Activated CD4-positive, alpha-beta memory T cell treated with anti-CD3 and anti-CD28 coated beads for 36 hours (primary cell): ENCODE measurements at regions of chr2 and their contacts with region 1.

Region 1: DNA sequence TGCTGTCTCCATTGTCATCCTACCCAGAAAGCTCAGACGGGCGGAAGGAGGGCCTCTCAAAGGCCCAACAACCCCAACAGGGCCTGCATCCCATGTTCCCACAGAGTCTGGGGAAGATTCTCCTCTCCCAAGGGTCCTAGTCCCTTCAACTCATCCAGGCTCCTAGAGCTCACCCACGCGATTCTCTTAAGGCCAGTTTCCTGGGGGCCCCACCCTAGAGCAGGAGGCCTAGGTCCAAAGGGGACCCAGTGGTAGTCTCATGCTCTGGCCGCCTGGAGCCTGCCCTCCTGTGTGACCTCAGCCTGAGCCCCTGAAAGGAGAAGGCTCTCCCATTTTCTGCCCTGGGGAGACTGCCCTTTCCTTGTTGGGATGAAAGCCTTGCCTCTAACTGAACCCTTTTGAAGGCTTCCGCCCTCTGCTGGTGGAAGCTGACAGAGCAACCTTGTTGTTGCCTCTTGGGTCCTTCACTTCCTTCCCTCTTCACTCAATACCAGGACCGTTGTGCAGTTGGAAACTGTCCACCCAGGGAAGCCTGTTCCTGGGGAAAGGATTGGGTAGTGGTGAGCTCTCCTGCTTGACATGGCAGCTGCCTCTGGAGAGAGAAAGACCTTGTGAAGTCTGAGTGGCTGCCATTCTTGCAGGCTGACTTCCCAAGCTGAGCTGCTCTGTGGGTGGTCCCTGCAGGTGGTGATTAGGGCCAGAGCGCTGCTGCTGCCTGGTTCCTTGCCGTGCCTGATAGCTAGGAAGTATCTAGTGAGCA is 86.0 kb upstream of the ALPP start:
- DNase-seq: peak; percentile 73
- H3K4me3 Mint-ChIP-seq: no peak overlapping the region
- H3K27ac Mint-ChIP-seq: no peak overlapping the region
- H3K4me1 Mint-ChIP-seq: no peaks in the 10 kb centered on the region
- H3K27me3 Mint-ChIP-seq: no peaks in the 10 kb centered on the region

Region 2: DNA sequence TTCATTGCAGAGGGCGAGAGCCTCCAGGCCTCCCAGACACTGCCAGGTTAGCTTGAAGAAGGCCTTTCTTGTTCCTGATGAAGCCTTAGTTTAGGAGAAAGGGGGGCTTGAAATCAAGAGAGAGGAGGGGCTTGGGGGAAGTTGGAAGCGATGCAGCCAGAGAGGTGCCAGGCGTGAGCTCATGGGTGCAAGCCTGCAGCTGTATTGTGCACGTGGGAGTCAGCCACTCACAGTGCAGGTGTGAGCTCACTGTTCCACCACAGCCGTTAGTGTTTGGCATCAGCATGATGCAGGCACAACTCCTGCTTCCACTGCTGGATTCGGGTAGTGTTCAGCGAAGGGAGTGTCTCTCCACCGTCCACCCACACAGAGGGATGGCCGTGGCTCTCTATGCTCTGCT is 17.5 kb after region 1 on chr2:
- CTCF ChIA-PET with region 1: interaction called, 76 read pairs
- POLR2A ChIA-PET with region 1: no interaction called
- intact Hi-C with region 1: no loop called
- DNase-seq: peak; percentile 70
- H3K4me3 Mint-ChIP-seq: no peak overlapping the region
- H3K27ac Mint-ChIP-seq: peak overlapping the region; percentile 72
- H3K4me1 Mint-ChIP-seq: peaks cover 48% of the 10 kb centered on the region
- H3K27me3 Mint-ChIP-seq: no peaks in the 10 kb centered on the region

Region 3: GRCh38 chr2:232321156-232321816 is 28.7 kb after region 1 on chr2:
- CTCF ChIA-PET with region 1: interaction called, 49 read pairs
- POLR2A ChIA-PET with region 1: no interaction called
- intact Hi-C with region 1: loop called (anchors 2 kb)
- DNase-seq: peak; percentile 81
- H3K4me3 Mint-ChIP-seq: peak overlapping the region; percentile 57
- H3K27ac Mint-ChIP-seq: peak overlapping the region; percentile 79
- H3K4me1 Mint-ChIP-seq: peaks cover 57% of the 10 kb centered on the region
- H3K27me3 Mint-ChIP-seq: no peaks in the 10 kb centered on the region